Head of caudate nucleus (tissue), 42 donors: ENCODE measurements at regions of chr6 and their contacts with region 1.

Region 1: DNA sequence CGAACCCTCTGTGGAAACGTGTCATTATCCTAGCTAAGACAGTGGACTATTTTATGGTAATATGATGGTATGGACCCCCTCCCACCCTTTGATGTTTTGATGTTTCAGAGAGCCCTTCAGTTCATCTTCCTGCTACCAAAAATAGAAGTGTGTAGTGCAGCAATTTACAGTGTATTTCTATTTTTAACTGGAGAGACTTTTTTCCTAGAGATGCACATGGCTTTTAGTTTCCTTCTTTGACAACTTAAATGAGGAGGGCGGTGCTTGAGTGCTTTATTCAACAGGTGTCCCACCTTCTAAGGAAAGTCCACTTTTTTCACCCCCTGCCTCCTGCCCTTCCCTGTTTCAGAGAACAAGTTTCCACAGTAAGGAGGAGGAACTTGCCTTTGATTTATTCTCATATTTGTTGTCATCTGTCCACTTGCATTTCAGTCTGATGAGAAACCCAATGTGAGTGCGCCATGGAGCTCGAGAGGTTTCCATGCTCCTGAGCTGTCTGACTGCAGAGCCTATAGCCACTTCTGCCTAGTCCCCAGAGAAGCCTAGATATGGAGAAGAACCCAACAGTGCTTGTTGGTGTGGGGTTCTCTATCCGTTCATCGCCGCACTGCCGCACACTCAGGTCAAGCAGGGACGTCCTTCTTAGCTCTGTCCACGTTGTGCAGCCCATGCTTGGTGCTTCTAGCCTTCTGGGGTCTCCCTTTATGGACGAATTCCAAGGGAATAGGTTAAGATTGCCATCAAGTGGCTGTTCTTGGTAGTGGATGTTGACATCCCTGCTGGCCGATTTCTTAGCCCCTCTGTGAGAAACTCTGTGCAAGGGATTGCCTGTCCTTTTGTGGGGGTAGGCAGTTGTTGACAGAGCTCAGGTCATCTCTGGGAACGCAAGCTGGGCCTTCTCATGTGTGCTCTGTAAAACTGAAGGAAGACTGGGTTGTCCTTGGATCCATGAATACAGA is 144.2 kb downstream of the JARID2 start:
- DNase-seq: peak in 14 of 42 donors; percentile 15 to 74 (median 42)

Region 2: GRCh38 chr6:14216946-14217684 is 1172.9 kb before region 1 on chr6:
- intact Hi-C with region 1: loop called (anchors 5 kb)
- DNase-seq: no peak

Region 3: GRCh38 chr6:15254070-15254841 is 135.8 kb before region 1 on chr6:
- intact Hi-C with region 1: loop called (anchors 5 kb)
- DNase-seq: peak in 13 of 42 donors; percentile 35 to 76 (median 55)